ENCODE measurements at regions of chr14 and their contacts with region 1.

Region 1: GRCh38 chr14:100654814-100655740 is 67.9 kb upstream of the BEGAIN start:
- DNase-seq: peak; percentile 76
- ATAC-seq: peak; percentile 71
- H3K4me3 Mint-ChIP-seq: no peak overlapping the region
- H3K27ac Mint-ChIP-seq: no peak overlapping the region
- H3K4me1 Mint-ChIP-seq: peaks cover 19% of the 10 kb centered on the region
- H3K27me3 Mint-ChIP-seq: peaks cover 15% of the 10 kb centered on the region
- CTCF ChIP-seq: peak; percentile 74

Region 2: DNA sequence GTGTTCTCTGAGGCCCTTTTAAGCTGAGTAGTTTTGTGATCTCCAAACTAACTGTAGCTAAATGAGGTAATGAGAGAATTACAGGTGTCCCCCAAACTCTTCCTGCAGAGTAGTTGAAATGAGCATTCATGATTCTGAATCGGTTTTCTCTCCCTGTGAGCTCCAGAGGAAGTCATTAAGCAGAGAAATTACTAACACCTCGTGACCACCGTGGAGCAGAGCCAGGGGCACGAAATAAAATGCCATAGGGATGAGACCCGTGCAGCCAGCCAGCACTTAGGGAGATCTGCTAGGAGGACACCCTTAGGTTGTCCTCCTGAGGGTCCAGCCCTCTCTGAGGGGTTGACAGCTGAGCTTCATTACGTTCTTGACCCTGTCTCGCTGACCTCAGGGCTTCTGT is 252.4 kb before region 1 on chr14:
- CTCF ChIA-PET with region 1: no interaction called
- POLR2A ChIA-PET with region 1: no interaction called
- DNase-seq: no peak
- ATAC-seq: no peak
- H3K4me3 Mint-ChIP-seq: no peak overlapping the region
- H3K27ac Mint-ChIP-seq: no peak overlapping the region
- H3K4me1 Mint-ChIP-seq: peaks cover 68% of the 10 kb centered on the region
- H3K27me3 Mint-ChIP-seq: no peaks in the 10 kb centered on the region
- CTCF ChIP-seq: no peak

Region 3: GRCh38 chr14:100440187-100440631 is 214.9 kb before region 1 on chr14:
- CTCF ChIA-PET with region 1: interaction called, 20 read pairs
- POLR2A ChIA-PET with region 1: no interaction called
- DNase-seq: peak; percentile 72
- ATAC-seq: peak; percentile 83
- H3K4me3 Mint-ChIP-seq: no peak overlapping the region
- H3K27ac Mint-ChIP-seq: 0 out of 2 replicates have a peak overlapping the region, but pooled peaks have one; percentile 43
- H3K4me1 Mint-ChIP-seq: peaks cover 33% of the 10 kb centered on the region
- H3K27me3 Mint-ChIP-seq: no peaks in the 10 kb centered on the region
- CTCF ChIP-seq: no peak

Region 4: GRCh38 chr14:100524933-100525243 is 130.2 kb before region 1 on chr14:
- CTCF ChIA-PET with region 1: interaction called, 65 read pairs
- POLR2A ChIA-PET with region 1: no interaction called
- DNase-seq: peak; percentile 76
- ATAC-seq: peak; percentile 82
- H3K4me3 Mint-ChIP-seq: no peak overlapping the region
- H3K27ac Mint-ChIP-seq: no peak overlapping the region
- H3K4me1 Mint-ChIP-seq: peaks cover 2% of the 10 kb centered on the region; the same call in 1 of the 2 replicates
- H3K27me3 Mint-ChIP-seq: no peaks in the 10 kb centered on the region
- CTCF ChIP-seq: peak; percentile 60; the same call in 1 of the 2 replicates

Region 5: GRCh38 chr14:100673036-100673806 is 18.1 kb after region 1 on chr14:
- CTCF ChIA-PET with region 1: interaction called, 14 read pairs
- POLR2A ChIA-PET with region 1: no interaction called
- DNase-seq: peak; percentile 62
- ATAC-seq: peak; percentile 87
- H3K4me3 Mint-ChIP-seq: peak overlapping the region; percentile 38
- H3K27ac Mint-ChIP-seq: no peak overlapping the region
- H3K4me1 Mint-ChIP-seq: peaks cover 26% of the 10 kb centered on the region
- H3K27me3 Mint-ChIP-seq: peaks cover 24% of the 10 kb centered on the region
- CTCF ChIP-seq: no peak

Region 6: GRCh38 chr14:101083564-101084435 is 428.7 kb after region 1 on chr14:
- CTCF ChIA-PET with region 1: no interaction called
- POLR2A ChIA-PET with region 1: no interaction called
- DNase-seq: peak; percentile 77
- ATAC-seq: peak; percentile 98
- H3K4me3 Mint-ChIP-seq: no peak overlapping the region
- H3K27ac Mint-ChIP-seq: no peak overlapping the region
- H3K4me1 Mint-ChIP-seq: peaks cover 4% of the 10 kb centered on the region
- H3K27me3 Mint-ChIP-seq: peaks cover 10% of the 10 kb centered on the region
- CTCF ChIP-seq: peak; percentile 46; the same call in 1 of the 2 replicates